Endothelial cell of umbilical vein (primary cell): ENCODE measurements at regions of chr1 and their contacts with region 1.

Region 1: GRCh38 chr1:244835276-244836134 is at the start of gene COX20:
- DNase-seq: peak; percentile 91
- H3K4me3 ChIP-seq: peak within 1 kb of the TSS; percentile 36 to 85 (median 80)
- H3K27ac ChIP-seq: peak within 1 kb of the TSS; percentile 85
- H3K4me1 ChIP-seq: peaks cover 23% of the 10 kb centered on the region
- H3K27me3 ChIP-seq: no peaks in the 10 kb centered on the region
- CTCF ChIP-seq: no peak
- POLR2A ChIP-seq: peak; percentile 68
- total RNA-seq, gene COX20: 30.2 and 37.0 TPM in 2 replicates

Region 2: DNA sequence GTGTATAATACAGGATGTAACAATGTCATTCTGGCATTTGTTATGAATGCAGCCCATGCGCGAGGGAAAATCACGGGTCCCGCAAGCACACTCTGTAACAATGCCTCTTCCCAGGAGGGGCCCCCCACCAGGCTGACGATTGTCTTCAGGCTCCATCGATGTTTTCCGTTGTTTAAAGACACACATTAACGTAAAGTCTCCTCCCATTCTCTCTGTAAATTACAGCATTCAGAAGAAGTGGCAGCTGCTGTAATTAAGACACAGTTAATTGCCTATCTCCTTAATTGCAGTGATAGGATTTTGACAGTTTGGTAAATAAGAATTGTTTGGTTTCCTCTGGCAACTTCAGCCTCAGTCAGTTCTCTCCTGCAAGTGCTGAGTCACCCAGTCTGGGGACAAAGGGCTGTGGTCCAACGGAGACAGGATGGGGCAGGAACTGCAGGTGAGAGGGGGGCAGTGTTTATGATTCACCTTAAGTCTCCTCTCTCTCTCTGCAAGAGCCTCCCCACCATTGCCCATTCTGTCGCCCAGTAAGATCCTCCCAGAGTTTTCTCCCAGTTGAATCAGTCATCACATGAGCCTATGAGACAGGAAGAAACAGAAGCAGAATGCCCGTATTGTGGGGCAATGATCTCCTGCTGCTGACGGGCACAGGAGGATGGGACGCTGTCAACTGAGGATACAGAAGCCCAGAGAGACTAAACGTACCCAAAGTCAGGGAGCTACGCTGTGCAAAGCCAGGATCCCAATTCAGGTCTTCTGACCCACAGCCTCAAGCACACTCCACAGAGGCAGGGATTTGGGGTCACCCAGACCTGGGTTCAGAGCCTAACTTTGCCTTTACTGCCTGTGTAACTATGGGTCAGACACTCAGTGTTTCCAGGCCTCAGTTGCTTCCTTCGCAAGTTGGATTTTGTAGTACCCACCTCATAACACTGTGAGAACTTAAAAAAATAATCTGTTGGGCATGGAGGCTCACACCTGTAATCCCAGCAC is 493.8 kb before region 1 on chr1:
- CTCF ChIA-PET with region 1: no interaction called
- POLR2A ChIA-PET with region 1: no interaction called
- dilution Hi-C with region 1: no loop called
- intact Hi-C with region 1: loop called (anchors 10 kb)
- DNase-seq: peak; percentile 93
- H3K4me3 ChIP-seq: no peak overlapping the region
- H3K27ac ChIP-seq: peak overlapping the region; percentile 56
- H3K4me1 ChIP-seq: peaks cover 16% of the 10 kb centered on the region
- H3K27me3 ChIP-seq: no peaks in the 10 kb centered on the region
- CTCF ChIP-seq: no peak
- POLR2A ChIP-seq: peak; percentile 17

Region 3: GRCh38 chr1:244652699-244653466 is 182.6 kb before region 1 on chr1 and contains the start of gene DESI2:
- CTCF ChIA-PET with region 1: no interaction called
- POLR2A ChIA-PET with region 1: no interaction called
- dilution Hi-C with region 1: no loop called
- intact Hi-C with region 1: loop called (anchors 1 kb)
- DNase-seq: peak; percentile 99
- H3K4me3 ChIP-seq: peak within 1 kb of the TSS; percentile 58 to 98 (median 90)
- H3K27ac ChIP-seq: peak within 1 kb of the TSS; percentile 83
- H3K4me1 ChIP-seq: peaks cover 16% of the 10 kb centered on the region
- H3K27me3 ChIP-seq: peaks cover 2 to 3% of the 10 kb centered on the region in 2 experiments
- CTCF ChIP-seq: peak; percentile 31 to 54
- POLR2A ChIP-seq: peak; percentile 96
- total RNA-seq, gene DESI2: 37.2 TPM in 2 replicates

Region 4: DNA sequence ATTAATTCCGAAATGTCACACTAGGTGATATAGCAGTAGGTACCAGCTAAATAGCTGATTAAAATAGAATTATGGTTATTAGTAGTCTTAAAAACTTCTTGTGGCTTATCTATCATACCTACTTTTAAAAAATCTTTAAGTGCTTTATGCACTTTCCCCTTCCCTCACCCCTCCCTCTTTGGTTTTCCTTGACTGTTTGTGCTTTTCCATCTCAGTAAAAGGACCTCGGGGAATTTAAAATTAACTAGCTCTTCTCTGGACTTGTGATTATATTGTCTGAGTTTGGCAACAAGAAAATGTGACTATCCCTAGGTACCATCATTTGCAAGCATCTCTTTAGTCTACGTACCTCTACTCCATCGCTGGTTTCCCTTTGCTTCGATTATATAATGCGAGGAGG is 11.1 kb after region 1 on chr1:
- CTCF ChIA-PET with region 1: interaction called, 10 read pairs
- POLR2A ChIA-PET with region 1: interaction called, 4 read pairs
- dilution Hi-C with region 1: no loop called
- intact Hi-C with region 1: loop called (anchors 1 kb)
- DNase-seq: no peak
- H3K4me3 ChIP-seq: no peak overlapping the region
- H3K27ac ChIP-seq: no peak overlapping the region
- H3K4me1 ChIP-seq: no peaks in the 10 kb centered on the region
- H3K27me3 ChIP-seq: no peaks in the 10 kb centered on the region
- CTCF ChIP-seq: no peak
- POLR2A ChIP-seq: no peak

Region 5: DNA sequence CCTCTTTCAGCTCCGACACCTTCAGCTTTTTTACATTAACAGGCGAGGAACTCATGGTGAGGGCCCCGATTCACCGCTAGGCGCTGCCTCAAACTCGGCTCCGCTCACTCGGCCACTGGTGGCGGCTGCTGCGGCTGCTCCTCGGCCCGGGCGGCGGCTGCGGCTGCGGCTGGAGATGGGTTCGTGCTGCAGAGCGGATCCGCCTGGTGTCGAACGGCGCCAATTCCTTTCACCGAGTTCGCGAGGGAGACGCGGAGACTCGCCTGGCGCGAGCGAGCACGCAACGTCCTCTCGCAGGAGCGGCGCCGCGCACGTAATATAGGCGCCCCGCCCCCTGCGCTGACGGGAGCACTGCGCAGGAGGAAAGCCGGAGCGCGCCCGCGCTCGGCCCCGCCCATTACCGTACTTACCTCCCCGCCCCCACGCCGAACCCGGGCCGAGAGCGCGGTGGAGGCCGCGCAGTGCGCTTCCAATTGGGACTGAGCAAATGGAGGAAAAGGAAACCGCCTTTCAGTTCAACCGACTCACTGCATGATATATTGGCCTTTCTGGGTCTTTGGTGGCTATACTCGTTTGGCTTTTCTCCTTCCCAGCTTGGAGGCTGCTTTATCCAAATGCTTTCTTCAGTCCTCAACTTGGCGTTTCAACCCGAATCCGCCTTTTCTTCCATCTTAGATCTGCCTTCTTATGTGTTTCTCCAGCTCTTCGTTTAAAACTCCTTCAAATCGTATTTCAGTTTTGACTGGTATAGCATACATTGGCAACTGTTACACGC is 28.9 kb after region 1 on chr1 and contains the start of gene HNRNPU:
- CTCF ChIA-PET with region 1: interaction called, 23 read pairs
- POLR2A ChIA-PET with region 1: interaction called, 26 read pairs
- dilution Hi-C with region 1: no loop called
- intact Hi-C with region 1: loop called (anchors 1 kb)
- DNase-seq: peak; percentile 98
- H3K4me3 ChIP-seq: peak within 1 kb of the TSS; percentile 87 to 96 (median 94)
- H3K27ac ChIP-seq: peak within 1 kb of the TSS; percentile 89
- H3K4me1 ChIP-seq: peaks cover 30% of the 10 kb centered on the region
- H3K27me3 ChIP-seq: no peaks in the 10 kb centered on the region
- CTCF ChIP-seq: peak; percentile 26 to 33
- POLR2A ChIP-seq: peak; percentile 96
- total RNA-seq, gene HNRNPU: 398 and 417 TPM in 2 replicates

Region 6: GRCh38 chr1:245091818-245092637 is 256.5 kb after region 1 on chr1:
- CTCF ChIA-PET with region 1: no interaction called
- POLR2A ChIA-PET with region 1: no interaction called
- dilution Hi-C with region 1: no loop called
- intact Hi-C with region 1: loop called (anchors 1 kb)
- DNase-seq: peak; percentile 99
- H3K4me3 ChIP-seq: no peak overlapping the region
- H3K27ac ChIP-seq: peak overlapping the region; percentile 96
- H3K4me1 ChIP-seq: peaks cover 23% of the 10 kb centered on the region
- H3K27me3 ChIP-seq: no peaks in the 10 kb centered on the region
- CTCF ChIP-seq: no peak
- POLR2A ChIP-seq: peak; percentile 63